GM10248 (cell line): ENCODE measurements at regions of chr7 and their contacts with region 1.

Region 1: DNA sequence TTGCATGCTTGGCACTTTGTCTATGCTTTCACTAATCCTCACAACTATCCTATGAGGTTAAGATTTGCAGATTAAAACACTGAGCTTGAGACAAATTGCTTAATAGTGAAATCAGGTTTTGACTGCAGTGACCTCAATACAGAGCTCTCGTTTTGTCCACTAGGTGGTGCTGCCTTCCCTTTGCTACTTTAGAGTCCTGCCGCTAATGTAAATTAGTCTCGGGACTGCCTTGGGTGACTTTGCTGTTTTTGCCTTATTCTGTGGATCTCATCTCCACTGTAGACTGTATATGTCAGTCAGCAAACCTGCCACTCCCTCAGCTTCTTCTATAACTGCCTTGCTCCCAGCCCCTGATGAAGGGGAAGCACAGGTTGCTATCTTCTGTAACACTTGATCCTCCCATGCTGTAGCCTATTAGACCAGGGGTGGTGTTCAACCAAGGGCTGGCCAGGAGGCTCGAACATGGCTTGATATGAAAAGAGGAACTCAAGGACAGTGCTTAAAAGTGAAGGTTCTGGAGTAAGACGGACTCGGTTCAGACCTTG is 26.0 kb downstream of the ASB4 start:
- DNase-seq: peak; percentile 41
- CTCF ChIP-seq: peak; percentile 88

Region 2: DNA sequence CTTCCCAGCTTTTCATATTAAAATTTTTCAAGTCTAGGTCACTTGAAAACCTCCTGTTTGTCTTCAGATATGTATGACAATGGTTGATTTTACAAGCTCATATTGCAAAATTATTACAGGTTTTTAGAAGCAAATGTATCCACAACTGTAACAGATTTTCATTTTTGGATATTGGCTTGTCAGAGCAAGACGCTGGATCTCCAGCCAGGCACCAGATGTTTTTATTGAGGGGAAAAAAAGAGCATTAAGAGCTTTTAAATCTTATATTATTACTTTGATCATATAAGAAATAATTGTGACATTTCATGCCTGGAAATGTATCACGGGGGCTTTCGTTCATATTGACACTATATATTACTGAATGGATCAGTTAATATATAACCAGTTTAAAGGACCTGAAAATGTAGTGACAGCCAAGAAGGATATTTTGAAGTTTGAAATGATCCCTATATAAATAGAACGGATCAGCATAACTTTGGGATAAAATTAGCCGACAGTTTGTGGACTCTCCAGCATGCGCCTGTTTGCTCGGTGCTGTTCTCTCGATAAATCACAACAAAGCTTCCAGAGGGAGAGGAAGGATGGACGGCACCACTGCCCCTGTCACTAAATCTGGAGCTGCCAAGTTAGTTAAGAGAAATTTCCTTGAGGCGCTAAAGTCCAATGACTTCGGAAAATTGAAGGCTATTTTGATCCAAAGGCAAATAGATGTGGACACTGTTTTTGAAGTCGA is 26.2 kb before region 1 on chr7 and contains the start of gene ASB4:
- CTCF ChIA-PET with region 1: interaction called, 71 read pairs
- POLR2A ChIA-PET with region 1: no interaction called
- DNase-seq: no peak
- CTCF ChIP-seq: no peak

Region 3: DNA sequence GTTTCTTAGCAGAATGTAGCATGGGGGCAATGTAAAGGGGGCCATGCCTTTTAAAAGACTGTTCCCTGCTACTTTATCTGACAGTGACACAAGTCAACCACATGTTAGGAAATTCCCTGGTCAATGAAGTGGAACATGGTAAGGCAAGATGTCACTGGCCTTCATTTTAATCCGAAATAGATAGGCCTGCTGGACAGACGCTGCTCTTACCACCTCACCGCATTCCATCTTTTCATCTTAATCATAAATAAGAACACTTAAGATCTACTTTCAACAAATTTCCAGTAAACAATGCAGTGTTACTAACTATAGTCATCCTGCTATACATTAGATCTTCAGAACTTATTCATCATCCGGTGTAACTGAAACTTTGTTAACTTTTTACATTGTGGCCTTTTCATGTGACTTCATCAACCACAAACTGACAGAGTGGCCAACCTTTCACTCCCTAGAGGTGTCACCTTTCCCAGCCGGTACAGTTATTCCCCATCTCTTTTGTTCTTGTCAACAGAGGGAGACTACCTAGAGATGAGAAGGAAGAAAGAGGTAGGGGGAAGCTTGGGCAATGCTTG is 10.4 kb before region 1 on chr7:
- CTCF ChIA-PET with region 1: interaction called, 60 read pairs
- POLR2A ChIA-PET with region 1: no interaction called
- DNase-seq: peak; percentile 25
- CTCF ChIP-seq: no peak

Region 4: GRCh38 chr7:95545078-95545498 is 33.3 kb after region 1 on chr7:
- CTCF ChIA-PET with region 1: interaction called, 11 read pairs
- POLR2A ChIA-PET with region 1: no interaction called
- DNase-seq: no peak
- CTCF ChIP-seq: peak; percentile 31

Region 5: GRCh38 chr7:95690367-95690947 is 178.7 kb after region 1 on chr7:
- CTCF ChIA-PET with region 1: interaction called, 198 read pairs
- POLR2A ChIA-PET with region 1: interaction called, 4 read pairs
- DNase-seq: peak; percentile 13
- CTCF ChIP-seq: peak; percentile 51

Region 6: GRCh38 chr7:95749515-95749914 is 237.7 kb after region 1 on chr7:
- CTCF ChIA-PET with region 1: no interaction called
- POLR2A ChIA-PET with region 1: no interaction called
- DNase-seq: no peak
- CTCF ChIP-seq: no peak